PC-9 (cell line): ENCODE measurements at regions of chr9 and their contacts with region 1.

Region 1: GRCh38 chr9:8633784-8634183 is 834.2 kb upstream of the DMAC1 start:
- DNase-seq: no peak
- H3K4me3 ChIP-seq: no peak overlapping the region
- H3K27ac ChIP-seq: no peak overlapping the region
- H3K4me1 ChIP-seq: no peaks in the 10 kb centered on the region
- H3K27me3 ChIP-seq: no peaks in the 10 kb centered on the region
- CTCF ChIP-seq: no peak

Region 2: GRCh38 chr9:8666060-8666459 is 32.3 kb after region 1 on chr9:
- CTCF ChIA-PET with region 1: no interaction called
- POLR2A ChIA-PET with region 1: interaction called, 10 read pairs
- intact Hi-C with region 1: no loop called
- DNase-seq: no peak
- H3K4me3 ChIP-seq: no peak overlapping the region
- H3K27ac ChIP-seq: no peak overlapping the region
- H3K4me1 ChIP-seq: no peaks in the 10 kb centered on the region
- H3K27me3 ChIP-seq: no peaks in the 10 kb centered on the region
- CTCF ChIP-seq: no peak